ENCODE measurements at regions of chr13 and their contacts with region 1.

Region 1: GRCh38 chr13:67075239-67075638 is 154.9 kb downstream of the PCDH9 start:
- DNase-seq: no peak
- H3K4me3 ChIP-seq: peak overlapping the region in 54 of 59 donors; percentile 0 to 61 (median 40)
- H3K27ac ChIP-seq: peak overlapping the region in 56 of 59 donors; percentile 4 to 100 (median 70)
- H3K27me3 ChIP-seq: no peaks in the 10 kb centered on the region
- CTCF ChIP-seq: peak in 52 of 56 donors; percentile 21 to 74 (median 54)

Region 2: DNA sequence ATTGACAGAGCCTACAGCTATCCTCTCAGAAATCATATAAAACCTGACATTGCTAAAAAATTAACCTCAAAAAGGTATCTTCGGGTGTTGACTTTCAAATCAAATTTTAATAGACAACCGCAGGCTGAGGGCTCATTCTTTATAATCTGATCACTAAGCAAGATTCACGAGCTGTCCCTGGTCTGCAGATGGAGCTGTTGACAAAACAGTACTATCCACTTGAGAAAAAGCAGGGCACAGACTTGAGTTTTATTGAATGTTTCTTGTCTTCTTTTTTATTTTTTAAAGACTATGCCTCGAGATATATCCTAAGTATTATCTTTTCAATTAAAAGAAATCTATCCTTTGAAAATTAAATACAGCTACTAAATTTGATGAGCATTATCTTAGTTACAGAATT is 385.6 kb before region 1 on chr13:
- intact Hi-C with region 1: no loop called
- DNase-seq: peak in 2 of 10 donors; percentile 47 to 67
- H3K4me3 ChIP-seq: peak overlapping the region in 5 of 59 donors; percentile 1 to 26 (median 11)
- H3K27ac ChIP-seq: peak overlapping the region in 18 of 59 donors; percentile 0 to 70 (median 19)
- H3K27me3 ChIP-seq: no peaks in the 10 kb centered on the region
- CTCF ChIP-seq: peak in 55 of 56 donors; percentile 19 to 72 (median 53)

Region 3: GRCh38 chr13:67224148-67224846 is 149.1 kb after region 1 on chr13:
- intact Hi-C with region 1: loop called in 1 of 2 experiments (anchors 2 kb)
- DNase-seq: peak; percentile 73 to 88 (median 84)
- H3K4me3 ChIP-seq: peak overlapping the region; percentile 53 to 97 (median 84)
- H3K27ac ChIP-seq: peak overlapping the region in 57 of 59 donors; percentile 26 to 99 (median 87)
- H3K27me3 ChIP-seq: no peaks in the 10 kb centered on the region
- CTCF ChIP-seq: peak; percentile 68 to 94 (median 84)